Naive thymus-derived CD4-positive, alpha-beta T cell (primary cell): ENCODE measurements at regions of chr19 and their contacts with region 1.

Region 1: DNA sequence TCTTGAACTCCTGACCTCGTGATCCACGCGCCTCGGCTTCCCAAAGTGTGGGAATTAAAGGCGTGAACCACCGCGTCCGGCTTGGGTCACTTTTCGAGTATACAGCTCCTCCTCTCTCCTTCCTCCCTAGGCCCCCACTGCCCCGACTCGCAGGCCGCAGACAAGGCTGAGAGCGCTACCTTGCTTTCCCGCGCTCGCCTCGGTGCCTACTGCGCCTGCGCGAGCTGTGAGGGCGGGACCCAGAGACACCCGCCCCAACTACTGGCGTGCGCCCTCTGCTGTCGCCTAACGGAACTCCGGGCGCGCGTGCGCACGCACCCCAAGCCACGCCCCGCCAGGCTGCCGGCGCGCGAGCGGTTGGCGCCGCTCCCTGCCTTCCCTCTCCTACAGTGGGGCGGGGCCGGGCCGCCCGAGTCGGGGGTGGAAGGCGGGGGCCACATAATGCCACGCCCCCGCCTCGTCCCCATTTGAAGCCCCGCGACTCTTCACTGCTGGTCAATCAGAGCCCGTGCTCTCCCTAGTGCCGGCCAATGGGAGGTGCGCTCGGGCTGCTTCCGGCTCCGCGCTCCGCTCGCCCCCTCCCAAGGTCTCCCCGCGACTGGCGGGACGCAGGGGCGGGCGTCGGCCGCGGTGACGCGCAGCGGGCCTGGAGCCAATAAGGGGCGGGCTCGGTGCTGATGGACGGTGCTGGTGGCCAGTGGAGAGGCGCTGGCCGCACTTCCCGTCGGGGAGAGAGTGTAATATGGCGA is at the start of gene RAB8A:
- DNase-seq: peak; percentile 98 to 100 (median 99)
- ATAC-seq: peak; percentile 93
- H3K4me3 ChIP-seq: peak within 1 kb of the TSS; percentile 90
- H3K4me3 Mint-ChIP-seq: peak within 1 kb of the TSS; percentile 93 to 99 (median 98)
- H3K27ac ChIP-seq: peak within 1 kb of the TSS; percentile 94
- H3K27ac Mint-ChIP-seq: peak within 1 kb of the TSS; percentile 89 to 99 (median 97)
- H3K4me1 ChIP-seq: peaks cover 10 to 19% of the 10 kb centered on the region in 2 donors
- H3K4me1 Mint-ChIP-seq: peaks cover 23 to 49% (median 40%) of the 10 kb centered on the region in 7 donors
- H3K27me3 ChIP-seq: no peaks in the 10 kb centered on the region
- H3K27me3 Mint-ChIP-seq: no peaks in the 10 kb centered on the region
- total RNA-seq, gene RAB8A: 64.4 to 154 (median 74.5) TPM

Region 2: DNA sequence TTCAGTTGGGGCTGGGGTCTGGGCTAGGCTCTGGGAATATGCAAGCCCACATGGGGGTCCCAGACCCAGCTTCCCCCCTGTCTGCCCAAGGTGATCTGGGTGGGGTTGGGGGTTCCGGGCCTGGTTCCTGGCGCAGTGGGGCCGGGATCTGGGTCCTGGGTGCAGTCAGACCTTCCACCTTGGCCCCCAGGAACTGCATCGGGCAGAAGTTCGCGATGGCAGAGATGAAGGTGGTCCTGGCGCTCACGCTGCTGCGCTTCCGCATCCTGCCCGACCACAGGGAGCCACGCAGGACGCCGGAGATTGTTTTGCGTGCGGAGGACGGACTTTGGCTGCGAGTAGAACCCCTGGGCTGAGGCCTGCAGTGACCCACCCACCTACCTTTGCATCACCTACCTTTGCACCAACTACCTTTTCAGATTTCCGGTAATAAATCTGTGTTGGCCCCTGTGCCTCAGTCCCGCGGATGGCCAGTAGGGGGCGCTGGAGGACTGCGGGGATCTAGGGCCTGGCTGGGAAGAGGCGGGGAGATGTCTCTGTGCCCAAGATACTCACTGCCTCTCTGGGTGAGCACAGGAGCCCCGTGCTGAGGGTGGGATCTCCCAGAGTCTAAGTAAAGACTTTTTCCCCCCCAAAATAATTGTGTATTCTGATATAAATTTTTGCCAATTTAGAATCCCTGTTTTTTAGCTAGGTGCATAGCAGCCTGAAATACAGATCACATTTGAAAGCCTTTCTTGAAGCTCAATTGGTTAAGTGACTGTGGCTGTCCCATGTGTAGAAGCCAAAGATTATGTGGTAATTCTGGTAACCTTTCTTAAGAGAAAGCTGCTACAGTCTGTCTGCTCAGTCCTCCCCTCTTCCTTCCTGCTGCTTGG is 482.1 kb before region 1 on chr19:
- CTCF ChIA-PET with region 1: interaction called, 3 read pairs
- POLR2A ChIA-PET with region 1: no interaction called
- intact Hi-C with region 1: loop called (anchors 1 kb)
- DNase-seq: peak; percentile 74 to 94 (median 85)
- ATAC-seq: peak; percentile 98
- H3K4me3 ChIP-seq: no peak overlapping the region
- H3K4me3 Mint-ChIP-seq: peak overlapping the region in 2 of 10 donors; percentile 6 to 37
- H3K27ac ChIP-seq: no peak overlapping the region
- H3K27ac Mint-ChIP-seq: peak overlapping the region in 1 of 9 donors; percentile 67
- H3K4me1 ChIP-seq: peaks cover 0 to 6% of the 10 kb centered on the region in 2 donors
- H3K4me1 Mint-ChIP-seq: no peaks in the 10 kb centered on the region
- H3K27me3 ChIP-seq: no peaks in the 10 kb centered on the region
- H3K27me3 Mint-ChIP-seq: peaks cover 5 to 43% (median 32%) of the 10 kb centered on the region in 5 donors

Region 3: DNA sequence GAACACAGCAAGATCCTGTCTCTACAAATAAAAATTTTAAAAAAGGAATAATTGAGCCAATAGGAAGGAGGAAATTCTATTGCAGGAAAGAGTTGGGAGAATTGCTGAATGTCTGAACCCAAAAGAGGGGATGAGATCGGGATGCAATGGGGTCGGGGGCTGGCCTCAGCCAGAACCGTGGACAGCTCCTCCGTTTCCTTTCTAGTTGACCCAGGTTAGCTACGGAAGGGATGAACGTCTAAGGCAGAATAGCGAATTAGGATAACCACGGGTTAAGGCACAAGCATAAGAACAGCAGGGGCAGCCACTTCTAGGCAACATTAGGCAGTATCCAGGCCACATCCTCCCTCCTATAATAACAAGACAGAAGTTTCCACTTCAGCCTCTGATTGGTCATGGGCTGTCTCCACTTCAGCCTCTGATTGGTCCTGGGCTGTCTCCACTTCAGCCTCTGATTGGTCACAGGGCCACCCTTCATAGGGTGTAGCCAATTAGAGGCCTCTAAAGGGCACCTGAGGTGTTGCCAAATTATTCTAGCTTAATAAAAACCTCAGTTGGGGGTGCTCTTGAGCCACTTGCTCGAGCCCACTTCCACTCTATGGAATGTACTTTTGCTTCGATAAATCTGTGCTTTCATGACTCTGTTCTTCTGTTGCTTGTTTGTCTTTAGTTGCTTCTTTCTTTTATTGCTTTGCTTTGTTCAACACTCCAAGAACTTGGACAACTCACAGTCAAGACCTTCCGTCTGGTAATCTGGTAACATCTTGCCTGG is 59.9 kb before region 1 on chr19:
- CTCF ChIA-PET with region 1: no interaction called
- POLR2A ChIA-PET with region 1: interaction called, 5 read pairs
- intact Hi-C with region 1: loop called in 1 of 2 experiments (anchors 1 kb)
- DNase-seq: peak in 7 of 9 donors; percentile 23 to 64 (median 44)
- ATAC-seq: peak; percentile 96
- H3K4me3 ChIP-seq: no peak overlapping the region
- H3K4me3 Mint-ChIP-seq: no peak overlapping the region
- H3K27ac ChIP-seq: no peak overlapping the region
- H3K27ac Mint-ChIP-seq: peak overlapping the region in 5 of 9 donors; percentile 31 to 59 (median 51)
- H3K4me1 ChIP-seq: no peaks in the 10 kb centered on the region
- H3K4me1 Mint-ChIP-seq: peaks cover 0 to 24% (median 15%) of the 10 kb centered on the region in 7 donors
- H3K27me3 ChIP-seq: no peaks in the 10 kb centered on the region
- H3K27me3 Mint-ChIP-seq: peaks cover 0 to 22% (median 0%) of the 10 kb centered on the region in 5 donors

Region 4: GRCh38 chr19:16076154-16076957 is 35.0 kb before region 1 on chr19 and contains the start of gene TPM4:
- CTCF ChIA-PET with region 1: interaction called, 26 read pairs
- POLR2A ChIA-PET with region 1: interaction called, 43 read pairs
- intact Hi-C with region 1: loop called (anchors 1 kb)
- DNase-seq: peak; percentile 43 to 89 (median 50)
- ATAC-seq: peak; percentile 68
- H3K4me3 ChIP-seq: peak within 1 kb of the TSS; percentile 82
- H3K4me3 Mint-ChIP-seq: peak within 1 kb of the TSS; percentile 84 to 97 (median 90)
- H3K27ac ChIP-seq: peak within 1 kb of the TSS; percentile 89
- H3K27ac Mint-ChIP-seq: peak within 1 kb of the TSS; percentile 90 to 99 (median 97)
- H3K4me1 ChIP-seq: peaks cover 29 to 72% of the 10 kb centered on the region in 2 donors
- H3K4me1 Mint-ChIP-seq: peaks cover 54 to 80% (median 65%) of the 10 kb centered on the region in 7 donors
- H3K27me3 ChIP-seq: no peaks in the 10 kb centered on the region
- H3K27me3 Mint-ChIP-seq: no peaks in the 10 kb centered on the region
- total RNA-seq, gene TPM4: 65.8 to 435 (median 126) TPM

Region 5: DNA sequence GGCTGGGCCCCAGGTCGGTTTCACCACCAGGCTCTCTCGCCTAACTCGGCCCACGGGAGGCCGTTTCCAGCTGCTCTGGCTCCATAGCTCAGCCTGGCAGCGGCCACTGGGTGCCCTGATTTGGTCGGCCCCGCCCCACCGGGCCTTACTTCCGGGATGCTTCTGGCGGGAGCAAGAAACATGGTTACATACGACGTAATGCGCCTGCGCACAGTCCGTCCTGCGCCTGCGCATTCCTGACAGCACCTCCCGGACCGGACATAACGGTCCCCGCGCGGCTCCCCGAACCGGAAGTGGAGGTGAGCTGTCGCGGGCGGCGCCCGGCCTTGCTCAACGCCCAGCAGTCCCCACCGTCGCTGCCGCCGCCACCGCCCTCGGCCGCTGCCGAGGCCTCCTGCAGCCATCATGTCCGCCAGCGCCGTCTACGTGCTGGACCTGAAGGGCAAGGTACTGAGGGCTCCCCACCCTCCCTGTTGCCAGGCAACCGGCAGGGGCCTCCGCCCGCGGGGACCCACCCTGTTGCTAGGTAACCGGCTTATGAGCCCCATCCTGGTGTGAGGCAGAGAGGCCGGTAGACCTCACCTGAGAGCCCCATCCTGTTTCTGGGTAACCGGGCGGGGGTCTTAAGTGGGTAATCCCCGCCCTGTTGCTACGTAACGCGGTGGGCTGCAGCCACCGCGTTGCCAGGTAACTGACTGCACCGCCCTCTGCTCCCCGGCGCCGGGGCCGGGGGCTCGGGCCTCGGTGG is 86.5 kb after region 1 on chr19 and contains the start of gene AP1M1:
- CTCF ChIA-PET with region 1: no interaction called
- POLR2A ChIA-PET with region 1: no interaction called
- intact Hi-C with region 1: loop called (anchors 1 kb)
- DNase-seq: peak; percentile 96 to 99 (median 97)
- ATAC-seq: peak; percentile 94
- H3K4me3 ChIP-seq: peak within 1 kb of the TSS; percentile 99
- H3K4me3 Mint-ChIP-seq: peak within 1 kb of the TSS; percentile 81 to 95 (median 90)
- H3K27ac ChIP-seq: peak within 1 kb of the TSS; percentile 95
- H3K27ac Mint-ChIP-seq: peak within 1 kb of the TSS; percentile 90 to 99 (median 97)
- H3K4me1 ChIP-seq: peaks cover 16 to 23% of the 10 kb centered on the region in 2 donors
- H3K4me1 Mint-ChIP-seq: peaks cover 38 to 49% (median 46%) of the 10 kb centered on the region in 7 donors
- H3K27me3 ChIP-seq: no peaks in the 10 kb centered on the region
- H3K27me3 Mint-ChIP-seq: no peaks in the 10 kb centered on the region
- total RNA-seq, gene AP1M1: 94.9 to 149 (median 125) TPM

Region 6: GRCh38 chr19:16495982-16496612 is 384.8 kb after region 1 on chr19 and contains the starts of genes C19orf44 and CALR3:
- CTCF ChIA-PET with region 1: no interaction called
- POLR2A ChIA-PET with region 1: no interaction called
- intact Hi-C with region 1: loop called (anchors 1 kb)
- DNase-seq: peak; percentile 84 to 97 (median 96)
- ATAC-seq: peak; percentile 99
- H3K4me3 ChIP-seq: peak within 1 kb of the TSS; percentile 90
- H3K4me3 Mint-ChIP-seq: peak within 1 kb of the TSS; percentile 86 to 98 (median 94)
- H3K27ac ChIP-seq: peak within 1 kb of the TSS; percentile 72
- H3K27ac Mint-ChIP-seq: peak within 1 kb of the TSS; percentile 74 to 98 (median 87)
- H3K4me1 ChIP-seq: peaks cover 0 to 4% of the 10 kb centered on the region in 2 donors
- H3K4me1 Mint-ChIP-seq: peaks cover 10 to 23% (median 19%) of the 10 kb centered on the region in 7 donors
- H3K27me3 ChIP-seq: no peaks in the 10 kb centered on the region
- H3K27me3 Mint-ChIP-seq: no peaks in the 10 kb centered on the region
- total RNA-seq, gene C19orf44: 1.5 to 6.0 (median 3.4) TPM
- total RNA-seq, gene CALR3: not detected